ENCODE measurements at regions of chr3 and their contacts with region 1.

Region 1: GRCh38 chr3:13346481-13347389 is 73.4 kb downstream of the NUP210 start:
- DNase-seq: peak; percentile 29 to 89 (median 86)
- ATAC-seq: peak; percentile 87
- H3K4me3 ChIP-seq: peak overlapping the region; percentile 33
- H3K4me3 Mint-ChIP-seq: peak overlapping the region; percentile 37 to 84 (median 71)
- H3K27ac ChIP-seq: peak overlapping the region; percentile 68
- H3K27ac Mint-ChIP-seq: peak overlapping the region; percentile 76 to 96 (median 91)
- H3K4me1 ChIP-seq: peaks cover 19 to 44% of the 10 kb centered on the region in 2 donors
- H3K4me1 Mint-ChIP-seq: peaks cover 42 to 64% (median 57%) of the 10 kb centered on the region in 7 donors
- H3K27me3 ChIP-seq: no peaks in the 10 kb centered on the region
- H3K27me3 Mint-ChIP-seq: no peaks in the 10 kb centered on the region

Region 2: GRCh38 chr3:13091898-13092611 is 254.7 kb before region 1 on chr3:
- CTCF ChIA-PET with region 1: interaction called, 6 read pairs
- POLR2A ChIA-PET with region 1: interaction called, 3 read pairs
- intact Hi-C with region 1: loop called (anchors 1 to 5 kb)
- DNase-seq: peak; percentile 51 to 82 (median 71)
- ATAC-seq: peak; percentile 88
- H3K4me3 ChIP-seq: no peak overlapping the region
- H3K4me3 Mint-ChIP-seq: no peak overlapping the region
- H3K27ac ChIP-seq: no peak overlapping the region
- H3K27ac Mint-ChIP-seq: peak overlapping the region in 1 of 9 donors; percentile 36
- H3K4me1 ChIP-seq: no peaks in the 10 kb centered on the region
- H3K4me1 Mint-ChIP-seq: peaks cover 0 to 14% (median 4%) of the 10 kb centered on the region in 7 donors
- H3K27me3 ChIP-seq: no peaks in the 10 kb centered on the region
- H3K27me3 Mint-ChIP-seq: peaks cover 0 to 17% (median 12%) of the 10 kb centered on the region in 5 donors

Region 3: GRCh38 chr3:13414040-13414729 is 67.5 kb after region 1 on chr3:
- CTCF ChIA-PET with region 1: interaction called, 14 read pairs
- POLR2A ChIA-PET with region 1: interaction called, 125 read pairs
- intact Hi-C with region 1: loop called in 1 of 2 experiments (anchors 1 kb)
- DNase-seq: peak; percentile 52 to 66 (median 60)
- ATAC-seq: peak; percentile 95
- H3K4me3 ChIP-seq: peak overlapping the region; percentile 40
- H3K4me3 Mint-ChIP-seq: peak overlapping the region; percentile 77 to 100 (median 86)
- H3K27ac ChIP-seq: peak overlapping the region; percentile 96
- H3K27ac Mint-ChIP-seq: peak overlapping the region; percentile 82 to 97 (median 93)
- H3K4me1 ChIP-seq: peaks cover 53 to 56% of the 10 kb centered on the region in 2 donors
- H3K4me1 Mint-ChIP-seq: peaks cover 37 to 78% (median 61%) of the 10 kb centered on the region in 7 donors
- H3K27me3 ChIP-seq: no peaks in the 10 kb centered on the region
- H3K27me3 Mint-ChIP-seq: no peaks in the 10 kb centered on the region

Region 4: GRCh38 chr3:13427662-13428603 is 81.2 kb after region 1 on chr3:
- CTCF ChIA-PET with region 1: interaction called, 6 read pairs
- POLR2A ChIA-PET with region 1: interaction called, 29 read pairs
- intact Hi-C with region 1: no loop called
- DNase-seq: peak in 7 of 9 donors; percentile 61 to 73 (median 66)
- ATAC-seq: peak; percentile 95
- H3K4me3 ChIP-seq: peak overlapping the region; percentile 6
- H3K4me3 Mint-ChIP-seq: peak overlapping the region; percentile 22 to 82 (median 68)
- H3K27ac ChIP-seq: peak overlapping the region; percentile 71
- H3K27ac Mint-ChIP-seq: peak overlapping the region; percentile 69 to 98 (median 91)
- H3K4me1 ChIP-seq: peaks cover 10 to 35% of the 10 kb centered on the region in 2 donors
- H3K4me1 Mint-ChIP-seq: peaks cover 18 to 55% (median 42%) of the 10 kb centered on the region in 7 donors
- H3K27me3 ChIP-seq: no peaks in the 10 kb centered on the region
- H3K27me3 Mint-ChIP-seq: no peaks in the 10 kb centered on the region

Region 5: DNA sequence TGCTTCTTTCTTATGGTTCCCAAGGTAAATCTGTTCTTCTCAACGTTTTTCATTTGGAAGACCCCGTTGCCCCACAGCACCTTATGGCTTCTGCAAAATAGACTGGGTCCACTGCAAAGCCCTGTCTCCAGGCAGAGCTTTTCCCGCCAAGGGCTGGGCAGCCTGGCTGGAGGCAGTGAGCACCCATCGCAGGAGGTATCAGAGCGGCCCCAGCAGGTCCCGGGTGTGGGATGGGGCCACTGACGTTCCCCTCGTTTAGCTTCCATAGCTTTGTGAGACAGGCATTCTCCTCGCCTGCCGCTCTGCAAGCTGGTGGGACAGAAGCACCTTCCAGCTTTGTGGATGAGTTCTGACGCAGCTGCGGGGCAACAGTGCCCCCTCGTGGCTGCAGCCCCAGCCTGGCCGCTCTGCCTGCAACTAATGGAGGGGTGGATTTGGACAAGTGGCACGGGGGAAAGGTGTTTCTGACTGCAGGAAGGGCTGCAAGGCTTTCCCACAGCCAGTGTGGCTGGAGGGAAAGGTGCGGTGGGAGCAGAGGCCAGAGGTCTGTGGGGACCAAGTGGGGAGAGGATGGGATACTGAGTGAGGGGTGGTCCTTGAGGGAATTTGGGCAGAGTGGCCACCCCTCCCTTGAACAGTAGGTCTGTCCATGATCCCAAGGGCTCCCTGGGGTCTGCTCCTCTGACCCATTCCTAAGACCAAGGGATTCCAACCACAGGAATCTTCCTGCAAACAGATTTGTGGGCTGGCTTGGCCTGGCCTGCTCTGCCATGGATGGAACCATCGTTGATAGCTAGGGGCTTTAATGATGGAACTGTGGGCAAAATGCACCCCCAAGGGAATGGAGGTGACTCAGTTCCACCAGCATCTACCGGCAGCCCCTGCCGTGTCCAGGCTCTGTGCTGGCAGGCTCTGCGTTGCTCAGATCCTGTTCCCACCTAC is 301.6 kb after region 1 on chr3:
- CTCF ChIA-PET with region 1: interaction called, 3 read pairs
- POLR2A ChIA-PET with region 1: no interaction called
- intact Hi-C with region 1: loop called in 1 of 2 experiments (anchors 2 kb)
- DNase-seq: peak; percentile 50 to 82 (median 72)
- ATAC-seq: peak; percentile 62
- H3K4me3 ChIP-seq: no peak overlapping the region
- H3K4me3 Mint-ChIP-seq: peak overlapping the region in 7 of 10 donors; percentile 17 to 64 (median 41)
- H3K27ac ChIP-seq: no peak overlapping the region
- H3K27ac Mint-ChIP-seq: peak overlapping the region in 2 of 9 donors; percentile 57 to 87
- H3K4me1 ChIP-seq: peaks cover 9 to 12% of the 10 kb centered on the region in 2 donors
- H3K4me1 Mint-ChIP-seq: peaks cover 14 to 40% (median 23%) of the 10 kb centered on the region in 7 donors
- H3K27me3 ChIP-seq: no peaks in the 10 kb centered on the region
- H3K27me3 Mint-ChIP-seq: peaks cover 15 to 48% (median 20%) of the 10 kb centered on the region in 5 donors

Region 6: GRCh38 chr3:14124615-14125190 is 778.0 kb after region 1 on chr3 and contains the starts of genes CHCHD4 and TMEM43:
- CTCF ChIA-PET with region 1: no interaction called
- POLR2A ChIA-PET with region 1: no interaction called
- intact Hi-C with region 1: loop called in 1 of 2 experiments (anchors 1 kb)
- DNase-seq: peak; percentile 91 to 99 (median 98)
- ATAC-seq: peak; percentile 96
- H3K4me3 ChIP-seq: peak within 1 kb of the TSS; percentile 100
- H3K4me3 Mint-ChIP-seq: peak within 1 kb of the TSS; percentile 93 to 98 (median 96)
- H3K27ac ChIP-seq: peak within 1 kb of the TSS; percentile 89
- H3K27ac Mint-ChIP-seq: peak within 1 kb of the TSS; percentile 87 to 97 (median 94)
- H3K4me1 ChIP-seq: peaks cover 28 to 30% of the 10 kb centered on the region in 2 donors
- H3K4me1 Mint-ChIP-seq: peaks cover 43 to 70% (median 63%) of the 10 kb centered on the region in 7 donors
- H3K27me3 ChIP-seq: no peaks in the 10 kb centered on the region
- H3K27me3 Mint-ChIP-seq: no peaks in the 10 kb centered on the region
- total RNA-seq, gene CHCHD4: 3.3 to 14.1 (median 8.4) TPM
- total RNA-seq, gene TMEM43: 30.1 to 54.8 (median 46.5) TPM